Activated naive CD4-positive, alpha-beta T cell treated with anti-CD3 and anti-CD28 coated beads for 36 hours (primary cell): ENCODE measurements at regions of chr1 and their contacts with region 1.

Region 1: DNA sequence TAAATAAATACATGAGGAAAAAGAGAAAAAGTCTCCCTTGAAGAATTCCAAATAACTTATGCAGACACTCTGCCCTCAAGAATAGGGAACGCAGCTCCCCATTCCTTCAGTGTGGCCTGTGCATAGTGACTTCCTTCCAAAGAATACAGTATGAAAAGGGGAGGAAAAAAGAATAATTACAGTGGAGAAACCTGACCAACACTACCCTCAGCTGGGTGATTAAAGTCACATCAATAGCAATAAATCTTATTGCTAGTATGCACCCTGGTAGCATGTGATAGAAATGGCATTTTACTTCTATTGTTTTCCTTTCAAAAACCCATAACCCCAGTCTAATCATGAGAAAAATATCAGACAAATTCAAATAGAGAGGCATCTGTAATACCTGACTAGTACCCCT is 85.1 kb downstream of the ZZZ3 start:
- DNase-seq: no peak
- H3K4me3 Mint-ChIP-seq: no peak overlapping the region
- H3K27ac Mint-ChIP-seq: no peak overlapping the region
- H3K4me1 Mint-ChIP-seq: peaks cover 16% of the 10 kb centered on the region
- H3K27me3 Mint-ChIP-seq: no peaks in the 10 kb centered on the region

Region 2: DNA sequence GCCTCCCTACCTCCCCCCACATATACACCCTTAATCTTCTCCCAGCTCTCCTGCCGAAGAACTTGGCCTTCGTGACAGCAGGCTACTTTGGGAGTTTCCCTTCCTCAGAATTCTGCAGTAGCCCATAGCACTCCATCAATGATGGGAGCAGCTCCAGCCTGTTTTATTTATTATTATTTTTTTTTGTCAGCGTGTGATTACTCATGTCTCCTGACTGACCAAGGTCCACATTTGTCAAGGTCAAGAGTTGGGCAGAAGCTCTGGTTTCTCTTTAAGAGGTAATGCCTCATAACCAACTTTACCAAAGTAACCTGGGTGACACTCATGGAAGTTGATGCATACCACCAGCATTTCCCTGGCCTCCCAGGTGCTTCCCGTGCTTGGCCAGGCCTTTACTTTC is 40.3 kb before region 1 on chr1:
- CTCF ChIA-PET with region 1: no interaction called
- intact Hi-C with region 1: no loop called
- DNase-seq: no peak
- H3K4me3 Mint-ChIP-seq: no peak overlapping the region
- H3K27ac Mint-ChIP-seq: no peak overlapping the region
- H3K4me1 Mint-ChIP-seq: peaks cover 5% of the 10 kb centered on the region
- H3K27me3 Mint-ChIP-seq: no peaks in the 10 kb centered on the region

Region 3: GRCh38 chr1:77579547-77579946 is 17.8 kb before region 1 on chr1:
- CTCF ChIA-PET with region 1: no interaction called
- intact Hi-C with region 1: loop called (anchors 2 kb)
- DNase-seq: no peak
- H3K4me3 Mint-ChIP-seq: no peak overlapping the region
- H3K27ac Mint-ChIP-seq: no peak overlapping the region
- H3K4me1 Mint-ChIP-seq: peaks cover 6% of the 10 kb centered on the region
- H3K27me3 Mint-ChIP-seq: no peaks in the 10 kb centered on the region

Region 4: DNA sequence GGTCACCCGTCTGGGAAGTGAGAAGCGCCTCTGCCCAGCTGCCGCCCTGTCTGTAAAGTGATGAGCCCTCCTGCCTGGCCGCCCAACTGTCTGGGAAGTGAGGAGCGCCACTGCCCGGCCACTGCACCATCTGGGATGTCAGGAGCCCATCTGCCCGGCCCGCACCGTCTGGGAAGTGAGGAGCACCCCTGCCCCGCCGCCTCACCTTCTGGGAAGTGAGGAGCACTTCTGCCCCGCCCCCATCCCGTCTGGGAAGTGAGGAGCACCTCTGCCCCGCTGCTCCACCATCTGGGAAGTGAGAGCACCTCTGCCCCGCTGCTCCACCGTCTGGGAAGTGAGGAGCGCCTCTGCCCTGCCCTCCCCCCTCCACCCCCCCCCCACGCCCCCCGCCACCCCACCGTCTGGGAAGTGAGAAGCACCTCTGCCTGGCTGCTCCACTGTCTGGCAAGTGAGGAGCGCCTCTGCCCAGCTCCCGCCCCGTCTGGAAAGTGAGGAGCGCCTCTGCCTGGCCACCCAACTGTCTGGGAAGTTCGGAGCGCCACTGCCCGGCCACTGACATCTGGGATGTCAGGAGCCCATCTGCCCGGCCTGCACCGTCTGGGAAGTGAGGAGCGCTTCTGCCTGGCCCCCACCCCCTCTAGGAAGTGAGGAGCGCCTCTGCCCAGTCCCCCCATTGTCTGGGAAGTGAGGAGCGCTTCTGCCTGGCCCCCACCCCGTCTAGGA is 89.6 kb after region 1 on chr1:
- CTCF ChIA-PET with region 1: no interaction called
- intact Hi-C with region 1: no loop called
- DNase-seq: no peak
- H3K4me3 Mint-ChIP-seq: no peak overlapping the region
- H3K27ac Mint-ChIP-seq: no peak overlapping the region
- H3K4me1 Mint-ChIP-seq: peaks cover 5% of the 10 kb centered on the region
- H3K27me3 Mint-ChIP-seq: no peaks in the 10 kb centered on the region

Region 5: GRCh38 chr1:78019018-78019417 is 421.7 kb after region 1 on chr1:
- CTCF ChIA-PET with region 1: no interaction called
- intact Hi-C with region 1: no loop called
- DNase-seq: no peak
- H3K4me3 Mint-ChIP-seq: no peak overlapping the region
- H3K27ac Mint-ChIP-seq: no peak overlapping the region
- H3K4me1 Mint-ChIP-seq: no peaks in the 10 kb centered on the region
- H3K27me3 Mint-ChIP-seq: no peaks in the 10 kb centered on the region